Activated CD4-positive, alpha-beta memory T cell treated with anti-CD3 and anti-CD28 coated beads, Interleukin-2, amount 10 ng/mL, durations not matched to agents 7 days and 5 days (primary cell): ENCODE measurements at regions of chr6 and their contacts with region 1.

Region 1: DNA sequence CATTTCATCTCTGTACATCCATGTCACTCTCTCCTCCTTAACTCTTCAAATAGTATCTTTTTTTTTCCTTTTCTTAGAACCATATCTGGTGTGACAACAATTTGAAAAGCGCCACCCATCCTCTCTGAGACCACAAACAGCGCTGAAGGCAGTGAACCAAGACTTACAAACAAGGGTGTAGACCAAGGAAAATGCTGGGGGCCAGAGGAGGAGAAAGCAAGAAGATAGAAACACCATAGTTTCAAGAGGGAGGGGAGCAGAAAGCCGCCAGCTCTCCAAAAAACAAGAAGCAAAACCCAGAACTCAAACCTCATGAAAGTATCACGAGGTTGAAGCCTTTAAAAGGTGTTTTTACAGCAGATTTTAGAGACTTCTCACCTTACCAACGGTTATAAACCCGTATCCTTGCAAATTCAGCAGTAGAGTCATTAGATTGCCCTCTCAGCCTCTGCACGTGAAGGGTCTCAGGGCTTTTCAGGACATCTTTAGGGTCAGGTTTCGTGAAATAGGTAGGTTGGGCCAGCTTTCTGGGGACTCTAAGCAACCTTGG is 13.3 kb upstream of the RIPOR2 start:
- DNase-seq: peak; percentile 85
- H3K4me3 Mint-ChIP-seq: peak overlapping the region; percentile 40
- H3K27ac Mint-ChIP-seq: peak overlapping the region; percentile 95
- H3K4me1 Mint-ChIP-seq: peaks cover 74% of the 10 kb centered on the region
- H3K27me3 Mint-ChIP-seq: no peaks in the 10 kb centered on the region

Region 2: DNA sequence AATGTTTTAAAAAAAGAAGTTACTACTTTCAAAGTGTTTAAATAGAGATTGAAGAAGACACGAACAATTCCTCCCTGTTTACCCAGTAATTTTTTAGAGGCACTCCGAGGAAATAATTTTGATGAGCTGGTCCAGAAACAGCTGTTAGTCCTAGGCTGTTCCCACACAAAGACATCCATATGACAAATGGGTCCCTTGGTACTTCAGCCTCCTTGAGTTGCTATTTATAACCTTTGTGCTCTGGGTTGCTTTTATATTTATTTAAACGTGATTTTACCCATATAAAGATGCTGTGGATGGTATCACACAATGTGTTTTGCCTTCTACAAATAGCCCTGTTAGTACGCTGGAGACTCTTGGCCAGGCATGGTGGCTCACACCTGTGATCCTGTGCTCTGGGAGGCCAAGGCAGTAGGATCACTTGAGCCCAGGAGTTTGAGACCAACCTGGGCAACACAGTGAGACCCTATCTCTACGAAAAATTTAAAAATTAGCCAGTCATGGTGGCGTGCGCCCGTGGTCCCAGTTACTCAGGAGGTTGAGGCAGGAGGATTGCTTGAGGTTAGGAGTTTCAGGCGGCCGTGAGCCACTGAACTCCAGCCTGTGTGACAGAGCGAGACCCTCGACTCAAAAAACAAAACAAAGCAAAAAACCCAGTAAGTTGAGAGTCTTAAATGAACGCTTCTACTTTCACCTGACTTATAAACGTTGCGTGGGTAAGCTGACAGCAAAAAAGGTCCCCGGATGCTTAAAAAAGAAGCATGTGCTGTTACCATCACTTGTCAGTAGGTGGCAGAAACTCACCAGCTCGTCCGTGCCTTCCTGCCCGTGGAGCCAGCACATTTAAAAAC is 93.5 kb before region 1 on chr6:
- CTCF ChIA-PET with region 1: interaction called, 5 read pairs
- POLR2A ChIA-PET with region 1: interaction called, 33 read pairs
- DNase-seq: peak; percentile 75
- H3K4me3 Mint-ChIP-seq: no peak overlapping the region
- H3K27ac Mint-ChIP-seq: peak overlapping the region; percentile 90
- H3K4me1 Mint-ChIP-seq: peaks cover 55% of the 10 kb centered on the region
- H3K27me3 Mint-ChIP-seq: no peaks in the 10 kb centered on the region

Region 3: DNA sequence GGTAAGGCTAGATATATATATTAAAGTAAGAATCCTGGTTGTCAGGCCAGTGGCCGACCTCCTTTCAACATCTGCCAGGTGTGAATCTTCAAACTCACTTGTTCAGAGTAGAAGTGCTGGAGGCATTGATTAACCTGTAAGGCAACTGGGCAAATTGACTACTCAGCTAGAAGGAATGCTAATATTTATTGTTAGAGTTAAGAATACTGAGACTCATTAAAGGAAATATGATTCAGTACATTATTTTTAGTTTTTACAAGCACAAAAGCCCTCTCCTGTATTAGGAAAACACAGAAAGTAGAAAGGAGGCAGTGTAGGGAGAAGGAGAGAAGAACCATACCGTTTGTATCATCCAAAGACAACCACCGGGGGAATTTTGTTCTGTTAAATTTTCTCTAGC is 66.8 kb before region 1 on chr6:
- CTCF ChIA-PET with region 1: no interaction called
- POLR2A ChIA-PET with region 1: no interaction called
- DNase-seq: no peak
- H3K4me3 Mint-ChIP-seq: no peak overlapping the region
- H3K27ac Mint-ChIP-seq: no peak overlapping the region
- H3K4me1 Mint-ChIP-seq: peaks cover 66% of the 10 kb centered on the region
- H3K27me3 Mint-ChIP-seq: no peaks in the 10 kb centered on the region

Region 4: GRCh38 chr6:24960991-24961475 is 11.9 kb after region 1 on chr6:
- CTCF ChIA-PET with region 1: interaction called, 4 read pairs
- POLR2A ChIA-PET with region 1: interaction called, 15 read pairs
- DNase-seq: no peak
- H3K4me3 Mint-ChIP-seq: no peak overlapping the region
- H3K27ac Mint-ChIP-seq: peak overlapping the region; percentile 64
- H3K4me1 Mint-ChIP-seq: peaks cover 59% of the 10 kb centered on the region
- H3K27me3 Mint-ChIP-seq: no peaks in the 10 kb centered on the region

Region 5: GRCh38 chr6:25006565-25007001 is 57.5 kb after region 1 on chr6:
- CTCF ChIA-PET with region 1: interaction called, 9 read pairs
- POLR2A ChIA-PET with region 1: interaction called, 64 read pairs
- DNase-seq: peak; percentile 75
- H3K4me3 Mint-ChIP-seq: peak overlapping the region; percentile 50
- H3K27ac Mint-ChIP-seq: peak overlapping the region; percentile 92
- H3K4me1 Mint-ChIP-seq: peaks cover 79% of the 10 kb centered on the region
- H3K27me3 Mint-ChIP-seq: no peaks in the 10 kb centered on the region

Region 6: DNA sequence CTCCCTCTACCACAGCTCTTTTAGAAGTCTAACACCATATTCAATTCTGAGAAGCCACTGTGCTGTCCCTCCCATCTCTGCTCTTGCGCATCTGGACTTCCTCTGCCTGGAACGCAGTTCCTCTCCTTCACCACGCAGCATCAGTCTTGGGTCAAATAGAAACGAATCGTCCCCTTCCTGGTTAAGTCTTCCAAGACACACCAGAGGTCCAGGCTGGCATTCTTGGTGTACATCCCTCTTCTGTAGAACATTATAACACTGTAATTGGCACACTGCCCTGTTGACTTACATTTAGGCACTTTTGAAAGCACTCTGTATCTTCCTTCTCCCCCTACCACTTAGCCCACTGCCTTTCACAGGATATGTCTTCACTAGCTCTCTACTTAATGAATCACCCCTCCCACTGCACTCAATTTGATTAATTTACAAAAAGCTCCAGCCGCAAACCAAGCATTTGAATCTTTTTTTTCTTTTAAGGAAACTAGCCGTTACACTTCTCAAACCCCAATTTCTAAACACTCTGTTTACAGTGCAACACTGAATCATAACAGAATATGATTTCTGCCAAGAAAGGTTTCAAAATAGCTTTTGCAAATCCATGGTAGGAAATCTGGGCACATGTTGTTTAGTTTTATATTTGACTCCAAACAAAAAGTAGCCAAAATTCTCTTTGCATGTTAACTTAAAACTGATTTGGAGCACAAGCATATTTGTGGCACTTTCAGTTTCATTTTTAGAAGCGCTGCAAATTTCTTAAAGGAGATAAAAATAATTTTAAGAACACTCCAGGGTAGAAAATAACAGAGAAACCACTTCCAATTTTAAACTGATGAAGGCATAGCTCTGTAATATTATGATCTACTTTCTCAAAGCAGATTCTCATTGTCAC is 189.4 kb after region 1 on chr6:
- CTCF ChIA-PET with region 1: no interaction called
- POLR2A ChIA-PET with region 1: interaction called, 12 read pairs
- DNase-seq: peak; percentile 81
- H3K4me3 Mint-ChIP-seq: peak overlapping the region; percentile 83
- H3K27ac Mint-ChIP-seq: peak overlapping the region; percentile 96
- H3K4me1 Mint-ChIP-seq: peaks cover 38% of the 10 kb centered on the region
- H3K27me3 Mint-ChIP-seq: no peaks in the 10 kb centered on the region